Activated CD4-positive, alpha-beta memory T cell treated with anti-CD3 and anti-CD28 coated beads, Interleukin-2, amount 10 ng/mL, durations not matched to agents 7 days and 5 days (primary cell): ENCODE measurements at regions of chr15 and their contacts with region 1.

Region 1: GRCh38 chr15:40694688-40695468 is at the start of gene RAD51:
- DNase-seq: peak; percentile 95
- H3K4me3 Mint-ChIP-seq: peak within 1 kb of the TSS; percentile 99
- H3K27ac Mint-ChIP-seq: peak within 1 kb of the TSS; percentile 100
- H3K4me1 Mint-ChIP-seq: peaks cover 46% of the 10 kb centered on the region
- H3K27me3 Mint-ChIP-seq: no peaks in the 10 kb centered on the region
- total RNA-seq, gene RAD51: 50.9 to 60.4 TPM

Region 2: DNA sequence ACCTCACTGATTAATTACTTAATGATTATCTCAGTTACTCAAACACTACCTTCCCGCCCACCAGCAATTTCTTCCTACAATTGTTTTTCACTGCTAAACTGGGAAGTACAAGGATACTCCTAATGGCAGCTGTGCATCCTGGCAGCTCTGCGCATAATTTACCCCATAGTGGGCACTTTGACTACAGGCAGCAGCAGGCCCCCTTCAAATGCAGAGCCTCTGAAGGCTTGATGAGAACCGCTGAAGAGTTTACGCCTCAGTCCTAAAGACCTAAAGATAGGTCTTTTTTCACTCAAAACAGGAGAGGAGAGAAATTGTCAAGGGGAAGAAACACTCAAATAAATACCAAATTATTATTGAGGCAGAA is 140.7 kb before region 1 on chr15:
- CTCF ChIA-PET with region 1: no interaction called
- POLR2A ChIA-PET with region 1: no interaction called
- DNase-seq: no peak
- H3K4me3 Mint-ChIP-seq: no peak overlapping the region
- H3K27ac Mint-ChIP-seq: no peak overlapping the region
- H3K4me1 Mint-ChIP-seq: peaks cover 2% of the 10 kb centered on the region
- H3K27me3 Mint-ChIP-seq: no peaks in the 10 kb centered on the region

Region 3: GRCh38 chr15:40593588-40594428 is 101.1 kb before region 1 on chr15 and contains the start of gene KNL1:
- CTCF ChIA-PET with region 1: interaction called, 4 read pairs
- POLR2A ChIA-PET with region 1: interaction called, 12 read pairs
- DNase-seq: peak; percentile 94
- H3K4me3 Mint-ChIP-seq: peak within 1 kb of the TSS; percentile 83
- H3K27ac Mint-ChIP-seq: peak within 1 kb of the TSS; percentile 96
- H3K4me1 Mint-ChIP-seq: peaks cover 48% of the 10 kb centered on the region
- H3K27me3 Mint-ChIP-seq: peaks cover 2% of the 10 kb centered on the region
- total RNA-seq, gene KNL1: 54.2 to 54.7 TPM

Region 4: GRCh38 chr15:40633143-40633542 is 61.7 kb before region 1 on chr15:
- CTCF ChIA-PET with region 1: no interaction called
- POLR2A ChIA-PET with region 1: no interaction called
- DNase-seq: no peak
- H3K4me3 Mint-ChIP-seq: no peak overlapping the region
- H3K27ac Mint-ChIP-seq: no peak overlapping the region
- H3K4me1 Mint-ChIP-seq: no peaks in the 10 kb centered on the region
- H3K27me3 Mint-ChIP-seq: no peaks in the 10 kb centered on the region

Region 5: GRCh38 chr15:40714214-40714613 is 19.3 kb after region 1 on chr15:
- CTCF ChIA-PET with region 1: interaction called, 3 read pairs
- POLR2A ChIA-PET with region 1: interaction called, 34 read pairs
- DNase-seq: no peak
- H3K4me3 Mint-ChIP-seq: no peak overlapping the region
- H3K27ac Mint-ChIP-seq: no peak overlapping the region
- H3K4me1 Mint-ChIP-seq: no peaks in the 10 kb centered on the region
- H3K27me3 Mint-ChIP-seq: no peaks in the 10 kb centered on the region

Region 6: GRCh38 chr15:40743921-40744814 is 49.3 kb after region 1 on chr15:
- CTCF ChIA-PET with region 1: interaction called, 22 read pairs
- POLR2A ChIA-PET with region 1: interaction called, 51 read pairs
- DNase-seq: peak; percentile 85
- H3K4me3 Mint-ChIP-seq: peak overlapping the region; percentile 53
- H3K27ac Mint-ChIP-seq: peak overlapping the region; percentile 95
- H3K4me1 Mint-ChIP-seq: peaks cover 48% of the 10 kb centered on the region
- H3K27me3 Mint-ChIP-seq: no peaks in the 10 kb centered on the region

Region 7: DNA sequence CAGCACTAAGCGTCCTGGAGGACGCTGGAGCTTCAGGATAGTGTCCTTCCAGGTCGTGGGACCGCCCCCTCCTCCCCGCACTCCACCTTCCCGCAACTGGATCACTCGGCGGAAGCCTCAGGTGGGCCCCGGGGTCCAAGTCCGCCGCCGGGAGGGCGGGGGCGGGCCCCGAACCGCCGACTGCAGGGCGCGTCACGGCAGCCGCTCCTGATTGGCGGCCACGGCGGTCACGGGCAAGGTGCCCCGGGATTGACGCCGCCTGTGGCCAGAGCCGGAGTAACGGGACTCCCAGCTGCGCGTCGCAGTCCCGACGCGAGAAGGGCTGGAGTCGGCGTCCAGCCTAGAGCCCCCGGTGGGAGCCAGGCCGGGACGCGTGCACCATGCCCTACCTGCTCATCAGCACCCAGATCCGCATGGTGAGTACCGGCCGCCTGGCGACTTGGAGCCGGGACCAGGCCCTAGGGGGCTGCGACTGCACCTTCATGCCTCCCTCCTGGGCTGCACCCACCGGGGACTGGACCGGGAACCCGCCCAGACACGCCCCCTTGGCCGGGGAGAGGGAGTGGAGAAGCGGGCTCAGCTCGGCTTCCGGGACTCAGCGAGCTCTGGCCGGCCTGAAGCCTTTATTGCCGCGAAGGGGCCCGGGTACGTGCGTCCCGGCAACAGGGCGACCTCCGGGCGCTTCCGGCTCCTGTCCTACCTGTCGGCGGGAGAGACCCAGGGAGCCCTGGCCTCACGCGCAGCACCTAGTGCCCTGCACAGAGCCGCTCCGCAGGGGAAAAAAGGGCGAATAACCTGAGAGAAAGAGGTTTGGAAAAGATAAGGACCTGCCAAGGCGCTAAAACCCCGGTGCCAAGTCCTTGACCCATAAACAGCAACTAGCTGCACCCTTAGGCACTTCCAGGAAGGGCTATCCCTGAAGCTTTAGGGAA is 69.2 kb after region 1 on chr15 and contains the start of gene GCHFR:
- CTCF ChIA-PET with region 1: interaction called, 3 read pairs
- POLR2A ChIA-PET with region 1: interaction called, 36 read pairs
- DNase-seq: peak; percentile 77
- H3K4me3 Mint-ChIP-seq: peak within 1 kb of the TSS; percentile 76
- H3K27ac Mint-ChIP-seq: peak within 1 kb of the TSS; percentile 83
- H3K4me1 Mint-ChIP-seq: peaks cover 44% of the 10 kb centered on the region
- H3K27me3 Mint-ChIP-seq: no peaks in the 10 kb centered on the region
- total RNA-seq, gene GCHFR: 39.4 to 39.6 TPM

Region 8: DNA sequence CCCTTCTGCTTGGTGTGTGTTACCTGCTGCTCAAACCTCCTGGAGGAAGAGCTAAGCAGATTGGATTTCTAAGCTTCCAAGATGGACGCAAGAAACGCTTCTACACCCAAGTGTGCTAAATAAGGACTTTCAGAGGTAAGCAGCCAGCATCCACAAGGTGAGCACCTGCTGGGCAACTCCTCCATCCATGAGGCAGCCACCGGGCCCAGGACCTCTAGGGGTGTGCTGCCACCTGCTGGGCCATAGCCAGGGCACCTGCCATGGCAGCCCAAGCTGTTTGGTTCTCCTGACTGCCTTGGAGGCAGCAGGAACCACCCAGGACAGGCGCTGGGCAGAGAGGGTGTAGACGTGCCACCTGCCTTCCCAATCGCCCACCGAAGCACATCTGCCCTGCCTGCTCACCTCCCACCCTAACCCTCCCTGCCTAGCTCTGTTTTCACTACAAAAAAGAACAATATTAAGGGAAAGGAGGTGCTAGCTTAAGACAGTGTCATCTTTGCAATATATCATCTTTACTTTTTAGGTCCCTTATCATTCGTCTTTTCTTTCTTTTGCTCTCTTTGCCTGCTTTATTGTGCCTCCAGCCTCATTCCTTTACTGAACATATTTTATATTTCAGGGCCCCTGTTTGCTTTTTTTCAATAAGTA is 87.8 kb after region 1 on chr15:
- CTCF ChIA-PET with region 1: interaction called, 12 read pairs
- POLR2A ChIA-PET with region 1: interaction called, 8 read pairs
- DNase-seq: peak; percentile 84
- H3K4me3 Mint-ChIP-seq: no peak overlapping the region
- H3K27ac Mint-ChIP-seq: no peak overlapping the region
- H3K4me1 Mint-ChIP-seq: peaks cover 16% of the 10 kb centered on the region
- H3K27me3 Mint-ChIP-seq: no peaks in the 10 kb centered on the region

Region 9: GRCh38 chr15:40852291-40852928 is 157.5 kb after region 1 on chr15:
- CTCF ChIA-PET with region 1: no interaction called
- POLR2A ChIA-PET with region 1: no interaction called
- DNase-seq: no peak
- H3K4me3 Mint-ChIP-seq: no peak overlapping the region
- H3K27ac Mint-ChIP-seq: no peak overlapping the region
- H3K4me1 Mint-ChIP-seq: peaks cover under 1% of the 10 kb centered on the region
- H3K27me3 Mint-ChIP-seq: peaks cover 1% of the 10 kb centered on the region